Caco-2 (cell line): ENCODE measurements at regions of chr11 and their contacts with region 1.

Region 1: GRCh38 chr11:47426061-47426956 is at the start of gene PSMC3:
- DNase-seq: peak; percentile 98 to 99
- H3K4me3 ChIP-seq: peak within 1 kb of the TSS; percentile 85
- H3K4me3 Mint-ChIP-seq: peak within 1 kb of the TSS; percentile 89
- H3K27ac Mint-ChIP-seq: peak within 1 kb of the TSS; percentile 97
- H3K4me1 ChIP-seq: peaks cover 8% of the 10 kb centered on the region; the same call in 1 of the 2 replicates
- H3K4me1 Mint-ChIP-seq: peaks cover 10% of the 10 kb centered on the region
- H3K27me3 ChIP-seq: no peaks in the 10 kb centered on the region
- H3K27me3 Mint-ChIP-seq: no peaks in the 10 kb centered on the region
- CTCF ChIP-seq: no peak
- total RNA-seq, gene PSMC3: 191 and 196 TPM in 2 replicates

Region 2: GRCh38 chr11:47083913-47084312 is 342.4 kb before region 1 on chr11:
- CTCF ChIA-PET with region 1: no interaction called
- POLR2A ChIA-PET with region 1: interaction called, 10 read pairs
- intact Hi-C with region 1: no loop called
- DNase-seq: no peak
- H3K4me3 ChIP-seq: no peak overlapping the region
- H3K4me3 Mint-ChIP-seq: no peak overlapping the region
- H3K27ac Mint-ChIP-seq: no peak overlapping the region
- H3K4me1 ChIP-seq: no peaks in the 10 kb centered on the region
- H3K4me1 Mint-ChIP-seq: no peaks in the 10 kb centered on the region
- H3K27me3 ChIP-seq: no peaks in the 10 kb centered on the region
- H3K27me3 Mint-ChIP-seq: no peaks in the 10 kb centered on the region
- CTCF ChIP-seq: no peak

Region 3: GRCh38 chr11:47269002-47269828 is 157.1 kb before region 1 on chr11:
- CTCF ChIA-PET with region 1: no interaction called
- POLR2A ChIA-PET with region 1: interaction called, 8 read pairs
- intact Hi-C with region 1: loop called (anchors 5 kb)
- DNase-seq: peak; percentile 93 to 94
- H3K4me3 ChIP-seq: peak overlapping the region; percentile 92
- H3K4me3 Mint-ChIP-seq: peak overlapping the region; percentile 66
- H3K27ac Mint-ChIP-seq: peak overlapping the region; percentile 93
- H3K4me1 ChIP-seq: peaks cover 28% of the 10 kb centered on the region
- H3K4me1 Mint-ChIP-seq: peaks cover 28% of the 10 kb centered on the region
- H3K27me3 ChIP-seq: no peaks in the 10 kb centered on the region
- H3K27me3 Mint-ChIP-seq: no peaks in the 10 kb centered on the region
- CTCF ChIP-seq: peak in 1 of 2 experiments; percentile 16

Region 4: DNA sequence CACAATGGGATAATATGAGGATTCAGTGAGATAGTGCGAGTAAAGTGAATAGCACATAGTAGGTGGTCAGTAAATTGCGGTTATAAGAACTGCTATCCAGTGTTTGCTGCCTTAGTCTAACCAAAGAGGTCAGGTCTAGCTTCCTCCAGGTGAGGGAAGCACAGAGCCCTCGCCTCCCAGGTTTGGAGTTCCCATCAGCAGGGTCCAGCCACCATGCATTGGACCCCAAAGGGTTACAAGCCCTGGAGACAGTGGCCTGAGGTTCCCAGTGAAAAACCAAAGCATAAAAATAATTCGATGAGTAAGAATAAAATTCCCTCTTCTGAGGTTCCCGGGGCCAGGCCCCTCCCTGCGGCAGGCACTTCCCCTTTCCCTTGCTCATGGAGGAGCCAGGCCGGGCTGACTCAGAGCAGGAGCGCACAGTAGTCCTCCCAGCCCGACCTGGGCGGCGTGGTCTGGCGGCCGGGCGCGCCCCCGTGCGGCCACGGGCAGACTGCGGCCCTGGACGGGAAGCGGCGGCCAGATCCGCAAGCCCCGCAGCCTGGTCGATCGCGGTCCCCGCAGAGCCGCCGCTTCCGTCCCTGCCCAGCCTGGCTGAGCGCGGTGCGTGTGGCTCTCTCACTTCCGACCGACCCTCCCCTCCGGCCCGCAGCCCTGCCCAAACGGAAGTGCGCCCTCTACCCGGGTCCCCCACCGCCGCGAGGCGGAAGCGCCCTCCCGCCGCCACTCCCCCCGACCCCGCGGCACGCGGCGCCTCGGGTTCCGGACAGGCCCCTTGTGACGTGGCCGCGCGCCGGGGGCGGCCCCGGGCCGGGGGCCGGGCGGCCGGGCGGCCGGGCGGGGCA is 18.3 kb before region 1 on chr11 and contains the start of gene SLC39A13:
- CTCF ChIA-PET with region 1: interaction called, 4 read pairs
- POLR2A ChIA-PET with region 1: interaction called, 5 read pairs
- intact Hi-C with region 1: loop called (anchors 1 kb)
- DNase-seq: peak; percentile 96 to 98
- H3K4me3 ChIP-seq: peak within 1 kb of the TSS; percentile 70
- H3K4me3 Mint-ChIP-seq: peak within 1 kb of the TSS; percentile 89
- H3K27ac Mint-ChIP-seq: peak within 1 kb of the TSS; percentile 82
- H3K4me1 ChIP-seq: peaks cover 9% of the 10 kb centered on the region; the same call in 1 of the 2 replicates
- H3K4me1 Mint-ChIP-seq: peaks cover 9% of the 10 kb centered on the region
- H3K27me3 ChIP-seq: no peaks in the 10 kb centered on the region
- H3K27me3 Mint-ChIP-seq: no peaks in the 10 kb centered on the region
- CTCF ChIP-seq: peak; percentile 60 to 85
- total RNA-seq, gene SLC39A13: 27.1 and 30.8 TPM in 2 replicates

Region 5: GRCh38 chr11:47477323-47477722 is 51.0 kb after region 1 on chr11:
- CTCF ChIA-PET with region 1: no interaction called
- POLR2A ChIA-PET with region 1: no interaction called
- intact Hi-C with region 1: no loop called
- DNase-seq: no peak
- H3K4me3 ChIP-seq: no peak overlapping the region
- H3K4me3 Mint-ChIP-seq: no peak overlapping the region
- H3K27ac Mint-ChIP-seq: no peak overlapping the region
- H3K4me1 ChIP-seq: no peaks in the 10 kb centered on the region
- H3K4me1 Mint-ChIP-seq: no peaks in the 10 kb centered on the region
- H3K27me3 ChIP-seq: no peaks in the 10 kb centered on the region
- H3K27me3 Mint-ChIP-seq: no peaks in the 10 kb centered on the region
- CTCF ChIP-seq: no peak

Region 6: GRCh38 chr11:47766305-47767227 is 340.3 kb after region 1 on chr11:
- CTCF ChIA-PET with region 1: no interaction called
- POLR2A ChIA-PET with region 1: no interaction called
- intact Hi-C with region 1: loop called (anchors 5 kb)
- DNase-seq: peak; percentile 50 to 67
- H3K4me3 ChIP-seq: peak overlapping the region; percentile 63
- H3K4me3 Mint-ChIP-seq: peak overlapping the region; percentile 80
- H3K27ac Mint-ChIP-seq: peak overlapping the region; percentile 100
- H3K4me1 ChIP-seq: peaks cover 6% of the 10 kb centered on the region; the same call in 1 of the 2 replicates
- H3K4me1 Mint-ChIP-seq: peaks cover 15% of the 10 kb centered on the region
- H3K27me3 ChIP-seq: no peaks in the 10 kb centered on the region
- H3K27me3 Mint-ChIP-seq: no peaks in the 10 kb centered on the region
- CTCF ChIP-seq: no peak